ENCODE measurements at regions of chr11 and their contacts with region 1.

Region 1: DNA sequence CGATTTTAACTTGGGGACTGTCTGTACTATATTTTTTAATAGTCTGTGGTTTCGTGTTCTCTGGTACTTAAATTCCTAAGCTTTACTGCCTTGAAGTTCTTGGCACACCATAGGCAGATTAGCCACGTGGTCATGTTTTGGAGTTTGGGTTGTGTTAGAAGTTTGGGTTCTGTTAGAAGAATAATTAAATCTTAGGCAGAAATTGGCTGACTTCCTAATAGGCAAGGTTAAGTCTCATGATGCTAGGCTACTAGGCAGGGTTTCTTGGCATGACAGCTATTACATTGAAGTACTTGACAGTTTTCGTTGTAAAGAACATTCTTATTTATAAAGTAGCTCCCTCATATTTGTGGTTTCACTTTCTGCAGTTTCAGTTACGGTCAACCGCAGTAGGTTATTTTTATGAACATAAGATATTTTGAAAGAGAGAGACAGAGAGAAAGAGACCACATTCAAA is 30.0 kb upstream of the MMP7 start:
- DNase-seq: peak in 6 of 9 donors; percentile 2 to 34 (median 12)
- ATAC-seq: peak; percentile 54
- H3K4me3 ChIP-seq: peak overlapping the region; percentile 34
- H3K4me3 Mint-ChIP-seq: peak overlapping the region; percentile 42 to 81 (median 78)
- H3K27ac ChIP-seq: peak overlapping the region; percentile 63
- H3K27ac Mint-ChIP-seq: peak overlapping the region; percentile 70 to 96 (median 88)
- H3K4me1 ChIP-seq: peaks cover 21 to 28% of the 10 kb centered on the region in 2 donors
- H3K4me1 Mint-ChIP-seq: peaks cover 27 to 50% (median 45%) of the 10 kb centered on the region in 7 donors
- H3K27me3 ChIP-seq: no peaks in the 10 kb centered on the region
- H3K27me3 Mint-ChIP-seq: peaks cover 0 to 2% (median 0%) of the 10 kb centered on the region in 5 donors

Region 2: DNA sequence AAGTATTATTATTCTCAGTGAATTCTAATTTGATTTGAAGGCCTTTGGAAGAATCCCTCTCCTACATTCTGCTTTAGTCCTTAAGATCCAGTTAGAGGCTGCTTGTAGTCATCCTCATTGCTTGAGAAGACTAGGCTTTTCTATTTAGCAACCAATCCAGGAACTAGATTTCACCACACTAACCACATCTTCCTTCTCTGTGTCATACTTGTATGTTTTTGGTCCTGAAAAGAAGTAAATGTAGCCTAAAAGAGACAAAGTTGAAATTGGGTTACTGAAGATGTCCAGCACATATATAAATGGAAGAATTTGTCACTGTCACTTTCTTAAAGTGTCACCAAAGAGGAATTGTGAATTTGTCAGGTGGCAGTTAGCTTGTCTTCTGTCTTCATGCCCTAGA is 16.6 kb after region 1 on chr11:
- CTCF ChIA-PET with region 1: interaction called, 3 read pairs
- POLR2A ChIA-PET with region 1: no interaction called
- intact Hi-C with region 1: loop called (anchors 1 kb)
- DNase-seq: peak in 6 of 9 donors; percentile 5 to 28 (median 16)
- ATAC-seq: peak; percentile 78
- H3K4me3 ChIP-seq: no peak overlapping the region
- H3K4me3 Mint-ChIP-seq: peak overlapping the region in 7 of 10 donors; percentile 2 to 66 (median 34)
- H3K27ac ChIP-seq: no peak overlapping the region
- H3K27ac Mint-ChIP-seq: peak overlapping the region; percentile 10 to 84 (median 59)
- H3K4me1 ChIP-seq: peaks cover 16 to 19% of the 10 kb centered on the region in 2 donors
- H3K4me1 Mint-ChIP-seq: peaks cover 11 to 37% (median 27%) of the 10 kb centered on the region in 7 donors
- H3K27me3 ChIP-seq: no peaks in the 10 kb centered on the region
- H3K27me3 Mint-ChIP-seq: peaks cover 0 to 1% (median 0%) of the 10 kb centered on the region in 5 donors

Region 3: GRCh38 chr11:102599642-102600261 is 39.2 kb after region 1 on chr11:
- CTCF ChIA-PET with region 1: interaction called, 3 read pairs
- POLR2A ChIA-PET with region 1: interaction called, 4 read pairs
- intact Hi-C with region 1: loop called in 1 of 2 experiments (anchors 5 kb)
- DNase-seq: no peak
- ATAC-seq: peak; percentile 70
- H3K4me3 ChIP-seq: no peak overlapping the region
- H3K4me3 Mint-ChIP-seq: no peak overlapping the region
- H3K27ac ChIP-seq: no peak overlapping the region
- H3K27ac Mint-ChIP-seq: peak overlapping the region in 1 of 9 donors; percentile 62
- H3K4me1 ChIP-seq: no peaks in the 10 kb centered on the region
- H3K4me1 Mint-ChIP-seq: peaks cover 0 to 31% (median 0%) of the 10 kb centered on the region in 7 donors
- H3K27me3 ChIP-seq: no peaks in the 10 kb centered on the region
- H3K27me3 Mint-ChIP-seq: no peaks in the 10 kb centered on the region

Measured in naive thymus-derived CD4-positive, alpha-beta T cell (primary cell).